Upper lobe of right lung (tissue), 1 donor: ENCODE measurements at regions of chr4 and their contacts with region 1.

Region 1: GRCh38 chr4:38174801-38175200 is 214.6 kb downstream of the PTTG2 start:
- DNase-seq: no peak
- ATAC-seq: peak; percentile 61
- H3K4me3 ChIP-seq: no peak overlapping the region
- H3K27ac ChIP-seq: no peak overlapping the region
- H3K4me1 ChIP-seq: peaks cover 26% of the 10 kb centered on the region
- H3K27me3 ChIP-seq: no peaks in the 10 kb centered on the region
- CTCF ChIP-seq: no peak

Region 2: DNA sequence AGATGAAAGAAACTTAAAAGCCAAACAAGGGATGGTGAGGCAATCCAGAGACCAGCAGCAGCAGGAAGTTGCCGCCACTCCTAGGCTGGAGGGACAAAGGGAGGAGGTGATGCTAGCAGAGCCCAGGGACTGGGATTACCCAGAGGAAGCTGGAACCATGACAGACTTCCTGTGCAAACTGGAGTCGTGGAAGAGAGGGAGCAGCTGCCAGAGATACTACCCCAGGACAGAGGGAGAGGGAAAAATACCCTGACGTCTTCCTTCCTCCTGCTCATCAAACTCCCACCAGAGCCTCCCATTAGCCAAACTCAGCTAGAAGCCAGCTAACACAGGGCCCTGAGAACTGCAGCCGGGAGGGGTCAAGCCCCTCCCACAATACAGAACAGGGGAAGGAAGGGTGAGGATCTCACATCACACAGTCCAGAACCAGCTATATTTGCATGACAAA is 388.0 kb after region 1 on chr4:
- intact Hi-C with region 1: no loop called
- DNase-seq: no peak
- ATAC-seq: peak; percentile 78
- H3K4me3 ChIP-seq: no peak overlapping the region
- H3K27ac ChIP-seq: peak overlapping the region; percentile 59
- H3K4me1 ChIP-seq: peaks cover 25% of the 10 kb centered on the region
- H3K27me3 ChIP-seq: no peaks in the 10 kb centered on the region
- CTCF ChIP-seq: no peak

Region 3: DNA sequence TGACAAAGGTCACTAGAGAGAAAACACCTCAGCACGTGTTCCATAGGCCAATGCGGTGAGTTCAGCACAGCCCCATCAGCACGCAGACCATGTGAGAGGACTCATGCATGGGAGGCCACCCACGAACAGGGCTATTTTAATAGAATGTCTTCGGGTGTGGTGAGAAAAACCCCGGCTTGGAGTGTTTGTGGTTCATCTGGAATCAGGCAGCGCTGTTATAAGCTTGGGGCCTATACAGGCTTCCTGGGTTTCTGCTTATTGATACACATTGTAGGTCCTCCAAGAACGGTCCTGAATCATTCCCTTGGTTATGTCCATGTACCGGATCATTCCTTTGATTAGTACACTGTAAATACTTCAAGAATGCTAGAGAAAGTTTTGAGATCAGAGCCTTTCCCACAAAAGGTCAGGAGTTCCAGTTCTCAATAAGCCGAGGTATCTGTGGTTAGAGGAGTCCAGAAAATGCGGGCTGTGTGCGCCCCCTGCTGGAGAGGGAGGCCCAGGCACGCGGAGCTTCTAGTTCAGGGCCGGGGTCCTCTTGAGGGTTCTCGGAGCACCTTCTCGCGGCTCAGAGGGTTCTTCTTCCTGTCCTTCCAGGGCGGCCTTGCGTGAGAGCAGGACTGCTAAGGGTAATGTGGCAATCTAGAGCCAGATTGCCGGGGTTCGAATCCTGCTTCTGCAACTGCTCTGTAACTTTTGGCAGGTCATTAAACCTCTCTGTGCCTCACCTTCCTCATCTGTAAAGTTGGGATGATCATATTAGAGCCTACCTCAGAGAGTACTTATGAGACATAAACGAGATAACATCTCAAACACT is 556.2 kb after region 1 on chr4:
- intact Hi-C with region 1: loop called (anchors 5 kb)
- DNase-seq: peak; percentile 88
- ATAC-seq: peak; percentile 85
- H3K4me3 ChIP-seq: no peak overlapping the region
- H3K27ac ChIP-seq: no peak overlapping the region
- H3K4me1 ChIP-seq: no peaks in the 10 kb centered on the region
- H3K27me3 ChIP-seq: no peaks in the 10 kb centered on the region
- CTCF ChIP-seq: peak; percentile 98